ENCODE measurements at regions of chr18 and their contacts with region 1.

Region 1: DNA sequence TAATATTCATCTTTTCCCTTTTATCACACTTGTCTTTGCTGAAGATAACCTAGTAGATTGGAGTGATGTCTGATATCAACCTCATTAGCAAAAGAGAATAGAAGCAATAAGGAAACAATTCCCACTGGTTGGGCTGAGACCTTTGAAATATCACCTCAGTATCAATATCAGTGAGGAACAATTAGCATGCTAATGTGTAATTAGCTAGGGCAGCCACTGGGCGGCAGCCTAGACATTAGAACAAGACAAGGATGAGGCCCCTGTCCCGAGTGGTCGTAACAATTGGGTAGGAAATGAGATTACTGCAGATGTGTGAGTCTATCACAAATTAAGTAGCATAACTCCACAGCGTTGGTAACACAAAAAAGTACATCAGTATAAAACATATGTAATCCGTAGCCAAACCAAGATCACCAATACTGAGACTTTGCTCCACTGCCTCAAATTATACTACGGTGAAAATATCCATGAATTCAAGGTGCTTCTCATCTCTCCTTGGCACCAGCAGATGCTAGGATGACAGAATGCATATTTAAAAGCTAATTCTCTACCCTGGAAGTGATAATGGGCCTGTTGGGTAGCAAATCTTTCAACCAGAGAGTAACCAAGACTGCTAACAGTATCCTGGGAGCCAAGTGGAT is 99.1 kb downstream of the ALPK2 start:
- DNase-seq: peak; percentile 45 to 59 (median 49)
- ATAC-seq: peak; percentile 75
- H3K4me3 ChIP-seq: no peak overlapping the region
- H3K27ac ChIP-seq: no peak overlapping the region
- H3K4me1 ChIP-seq: no peaks in the 10 kb centered on the region
- H3K27me3 ChIP-seq: peaks cover 0 to 3% of the 10 kb centered on the region in 2 experiments; a peak in 1 of 5 replicates
- CTCF ChIP-seq: peak; percentile 58 to 76 (median 70)
- EP300 ChIP-seq: no peak
- POLR2A ChIP-seq: no peak
- RAD21 ChIP-seq: peak; percentile 81 to 89

Region 2: GRCh38 chr18:58513615-58514335 is 16.1 kb before region 1 on chr18:
- CTCF ChIA-PET with region 1: no interaction called
- POLR2A ChIA-PET with region 1: no interaction called
- in situ Hi-C with region 1: no loop called
- intact Hi-C with region 1: loop called (anchors 1 kb)
- DNase-seq: no peak
- ATAC-seq: no peak
- H3K4me3 ChIP-seq: no peak overlapping the region
- H3K27ac ChIP-seq: no peak overlapping the region
- H3K4me1 ChIP-seq: no peaks in the 10 kb centered on the region
- H3K27me3 ChIP-seq: no peaks in the 10 kb centered on the region
- CTCF ChIP-seq: no peak
- EP300 ChIP-seq: no peak
- POLR2A ChIP-seq: no peak
- RAD21 ChIP-seq: no peak

Region 3: DNA sequence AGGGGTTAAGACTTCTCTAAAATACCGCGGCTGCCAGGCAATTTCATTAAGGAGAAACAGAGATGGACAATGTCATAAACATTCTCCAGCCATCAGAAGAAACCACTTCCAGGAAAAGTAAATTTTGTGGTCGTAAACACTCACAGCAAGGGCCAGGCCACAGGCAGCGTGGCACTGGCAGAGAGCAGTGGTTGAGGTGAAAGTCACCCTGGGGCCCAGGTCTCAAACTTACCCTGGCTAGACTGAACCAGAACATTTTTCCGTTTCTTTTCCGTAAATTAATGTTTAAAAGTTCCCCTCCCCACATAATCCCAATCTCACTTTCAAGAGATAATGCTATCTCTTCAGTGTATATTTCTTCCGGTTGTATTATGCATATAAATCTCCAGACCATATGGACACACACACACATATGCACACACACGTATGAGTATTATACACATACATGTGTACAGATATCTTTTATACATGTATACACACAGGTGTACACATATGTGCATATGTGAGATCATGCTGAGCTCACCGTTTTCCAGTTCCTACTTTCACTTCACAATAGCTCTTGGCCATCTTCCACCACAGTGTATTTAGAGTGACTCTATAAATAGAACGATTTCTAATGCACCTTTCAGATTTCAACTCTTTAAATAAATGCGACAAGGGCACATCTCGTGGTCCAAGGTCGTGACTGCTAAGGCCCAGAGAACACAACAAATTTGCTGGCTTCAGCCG is 231.6 kb after region 1 on chr18:
- CTCF ChIA-PET with region 1: interaction called, 29 read pairs
- POLR2A ChIA-PET with region 1: no interaction called
- in situ Hi-C with region 1: loop called (anchors 5 kb)
- intact Hi-C with region 1: loop called (anchors 1 kb)
- DNase-seq: no peak
- ATAC-seq: no peak
- H3K4me3 ChIP-seq: no peak overlapping the region
- H3K27ac ChIP-seq: no peak overlapping the region
- H3K4me1 ChIP-seq: no peaks in the 10 kb centered on the region
- H3K27me3 ChIP-seq: peaks cover 0 to 11% of the 10 kb centered on the region in 2 experiments; a peak in 1 of 5 replicates
- CTCF ChIP-seq: no peak
- EP300 ChIP-seq: no peak
- POLR2A ChIP-seq: no peak
- RAD21 ChIP-seq: no peak

Region 4: DNA sequence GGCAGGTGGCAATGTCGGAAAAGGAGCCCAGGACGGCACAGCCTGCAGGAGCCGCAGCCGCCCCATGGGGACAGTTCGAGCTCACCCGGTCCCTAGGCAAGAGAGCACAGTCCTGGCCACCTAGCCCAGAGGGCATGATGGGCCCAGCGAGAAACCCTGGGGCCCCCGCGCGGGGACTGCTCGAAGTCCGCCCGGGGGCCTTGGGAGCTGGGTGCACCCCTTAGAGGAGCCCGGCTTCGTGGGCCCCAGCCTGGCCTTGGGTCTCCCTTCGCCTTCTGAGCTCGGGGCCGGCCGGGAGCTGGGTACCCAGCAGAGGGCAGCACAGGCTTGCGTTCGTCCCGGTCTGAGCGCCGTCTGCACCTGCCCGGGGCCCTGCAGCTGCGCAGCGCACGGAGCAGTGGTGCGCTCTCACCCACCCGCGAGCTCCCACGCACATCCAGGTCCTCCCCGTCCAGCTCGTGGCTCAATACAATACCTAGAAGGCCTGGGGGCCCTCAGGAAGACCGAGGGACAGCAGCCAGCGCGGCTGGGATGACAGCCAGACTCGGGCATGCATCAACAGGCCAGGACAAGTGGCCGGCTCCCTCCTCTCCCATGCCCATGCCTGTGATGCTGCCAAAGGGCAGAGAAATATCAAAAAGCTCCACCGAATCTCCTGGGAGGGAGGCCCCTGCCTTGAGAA is 238.6 kb after region 1 on chr18:
- CTCF ChIA-PET with region 1: interaction called, 29 read pairs
- POLR2A ChIA-PET with region 1: no interaction called
- in situ Hi-C with region 1: loop called (anchors 5 kb)
- intact Hi-C with region 1: loop called (anchors 1 kb)
- DNase-seq: peak; percentile 36 to 50 (median 46)
- ATAC-seq: peak; percentile 98
- H3K4me3 ChIP-seq: no peak overlapping the region
- H3K27ac ChIP-seq: no peak overlapping the region
- H3K4me1 ChIP-seq: peaks cover 0 to 6% of the 10 kb centered on the region in 2 experiments; a peak in 2 of 5 replicates
- H3K27me3 ChIP-seq: no peaks in the 10 kb centered on the region
- CTCF ChIP-seq: peak in 2 of 3 experiments; percentile 53 to 57; a peak in 5 of 6 replicates
- EP300 ChIP-seq: no peak
- POLR2A ChIP-seq: no peak
- RAD21 ChIP-seq: peak; percentile 35 to 58; a peak in 3 of 4 replicates

Region 5: GRCh38 chr18:59056706-59057492 is 527.1 kb after region 1 on chr18:
- CTCF ChIA-PET with region 1: no interaction called
- POLR2A ChIA-PET with region 1: no interaction called
- in situ Hi-C with region 1: no loop called
- intact Hi-C with region 1: loop called (anchors 10 kb)
- DNase-seq: peak; percentile 11 to 50 (median 31)
- ATAC-seq: peak; percentile 78
- H3K4me3 ChIP-seq: no peak overlapping the region
- H3K27ac ChIP-seq: no peak overlapping the region
- H3K4me1 ChIP-seq: no peaks in the 10 kb centered on the region
- H3K27me3 ChIP-seq: peaks cover 0 to 15% of the 10 kb centered on the region in 2 experiments; a peak in 2 of 5 replicates
- CTCF ChIP-seq: peak; percentile 51 to 71 (median 65)
- EP300 ChIP-seq: no peak
- POLR2A ChIP-seq: no peak
- RAD21 ChIP-seq: peak; percentile 57 to 71

Region 6: DNA sequence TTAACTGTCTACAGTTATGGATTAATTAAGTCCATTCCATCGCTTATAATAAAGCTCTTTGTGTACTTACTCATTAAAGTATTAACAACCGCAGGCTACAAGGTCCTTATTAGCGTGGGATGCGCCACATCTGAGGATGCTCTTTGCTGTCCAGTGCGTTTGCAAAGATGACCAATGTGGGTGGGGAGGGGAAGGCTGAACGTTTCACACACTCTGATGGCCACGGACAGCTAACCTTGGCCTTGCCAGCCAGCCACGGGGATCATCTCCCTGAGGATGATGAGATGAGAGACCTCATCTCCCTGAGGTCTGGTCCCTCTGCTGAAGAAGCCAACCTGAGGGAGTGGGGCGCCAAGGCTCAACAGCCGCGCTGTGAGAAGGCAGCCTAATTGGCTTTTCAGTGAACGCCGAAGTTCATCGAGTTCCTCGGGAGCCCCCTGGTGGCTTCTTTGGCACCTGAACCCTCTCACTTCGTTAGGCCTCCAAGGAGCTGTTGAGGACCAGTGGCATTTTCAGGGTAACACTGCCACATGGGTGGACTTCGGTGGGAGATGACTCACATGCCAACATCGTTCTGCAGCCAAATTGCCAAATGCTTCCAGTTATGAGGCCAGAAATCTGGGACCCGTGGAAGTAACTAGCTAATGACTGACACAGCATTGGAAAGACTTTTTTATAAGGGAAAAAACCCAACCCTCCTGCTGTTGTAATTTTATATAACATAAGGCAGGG is 540.5 kb after region 1 on chr18:
- CTCF ChIA-PET with region 1: interaction called, 3 read pairs
- POLR2A ChIA-PET with region 1: no interaction called
- in situ Hi-C with region 1: loop called (anchors 10 kb)
- intact Hi-C with region 1: no loop called
- DNase-seq: peak; percentile 47 to 67 (median 54)
- ATAC-seq: peak; percentile 90
- H3K4me3 ChIP-seq: no peak overlapping the region
- H3K27ac ChIP-seq: no peak overlapping the region
- H3K4me1 ChIP-seq: no peaks in the 10 kb centered on the region
- H3K27me3 ChIP-seq: peaks cover 0 to 7% of the 10 kb centered on the region in 2 experiments; a peak in 1 of 5 replicates
- CTCF ChIP-seq: peak; percentile 60 to 68 (median 63)
- EP300 ChIP-seq: no peak
- POLR2A ChIP-seq: no peak
- RAD21 ChIP-seq: peak; percentile 47 to 62

Measured in K562 (cell line).